Left colon (tissue), 2 donors: ENCODE measurements at regions of chr3 and their contacts with region 1.

Region 1: GRCh38 chr3:63908081-63908736 is 4.0 kb downstream of the SCAANT1 start:
- DNase-seq: no peak
- ATAC-seq: no peak

Region 2: GRCh38 chr3:63719796-63720445 is 188.3 kb before region 1 on chr3:
- intact Hi-C with region 1: no loop called
- DNase-seq: no peak
- ATAC-seq: peak; percentile 78

Region 3: GRCh38 chr3:63993653-63994079 is 85.5 kb after region 1 on chr3:
- intact Hi-C with region 1: loop called in 1 of 2 experiments (anchors 10 kb)
- DNase-seq: peak; percentile 45 to 66
- ATAC-seq: peak; percentile 92